ENCODE measurements at regions of chr10 and their contacts with region 1.

Region 1: GRCh38 chr10:98467506-98468346 is 21.0 kb upstream of the HPS1 start:
- DNase-seq: peak; percentile 68
- ATAC-seq: peak; percentile 92
- H3K4me3 Mint-ChIP-seq: peak overlapping the region; percentile 76
- H3K27ac Mint-ChIP-seq: no peak overlapping the region
- H3K4me1 Mint-ChIP-seq: peaks cover 42% of the 10 kb centered on the region
- H3K27me3 Mint-ChIP-seq: peaks cover 28% of the 10 kb centered on the region
- CTCF ChIP-seq: peak; percentile 65

Region 2: DNA sequence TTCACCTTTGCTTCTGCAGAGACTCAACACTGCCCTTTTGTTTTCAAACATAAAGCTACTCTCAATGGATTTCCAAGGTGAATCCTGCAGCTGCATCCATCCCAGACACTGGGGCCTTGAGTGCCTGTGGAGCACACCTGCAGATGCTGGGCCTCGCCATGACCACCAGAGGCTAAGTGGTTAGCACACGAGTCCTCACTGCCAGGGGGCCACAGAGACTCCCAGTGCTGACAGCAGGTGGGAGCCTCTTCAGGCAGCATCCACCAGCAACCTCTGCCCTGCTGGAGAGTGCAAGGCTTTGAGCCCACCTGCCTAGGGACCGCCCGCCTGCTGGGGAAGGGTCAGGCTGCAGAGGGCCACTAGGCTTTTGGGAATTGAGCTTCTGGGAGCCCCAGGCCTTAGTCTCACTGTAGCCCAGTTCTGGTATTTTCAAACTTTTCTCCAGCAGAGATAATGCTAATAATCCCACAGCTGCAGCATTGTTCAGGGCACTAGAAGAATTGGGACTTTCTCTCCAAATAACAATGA is 11.6 kb before region 1 on chr10:
- CTCF ChIA-PET with region 1: interaction called, 26 read pairs
- POLR2A ChIA-PET with region 1: no interaction called
- DNase-seq: no peak
- ATAC-seq: peak; percentile 11; the same call in 1 of the 2 replicates
- H3K4me3 Mint-ChIP-seq: no peak overlapping the region
- H3K27ac Mint-ChIP-seq: no peak overlapping the region
- H3K4me1 Mint-ChIP-seq: peaks cover 44% of the 10 kb centered on the region
- H3K27me3 Mint-ChIP-seq: no peaks in the 10 kb centered on the region; the same call in 1 of the 2 replicates
- CTCF ChIP-seq: no peak

Region 3: GRCh38 chr10:98646998-98647917 is 179.5 kb after region 1 on chr10:
- CTCF ChIA-PET with region 1: interaction called, 13 read pairs
- POLR2A ChIA-PET with region 1: no interaction called
- DNase-seq: peak; percentile 35
- ATAC-seq: peak; percentile 93
- H3K4me3 Mint-ChIP-seq: peak overlapping the region; percentile 34
- H3K27ac Mint-ChIP-seq: peak overlapping the region; percentile 96
- H3K4me1 Mint-ChIP-seq: peaks cover 44% of the 10 kb centered on the region
- H3K27me3 Mint-ChIP-seq: no peaks in the 10 kb centered on the region
- CTCF ChIP-seq: no peak

Region 4: DNA sequence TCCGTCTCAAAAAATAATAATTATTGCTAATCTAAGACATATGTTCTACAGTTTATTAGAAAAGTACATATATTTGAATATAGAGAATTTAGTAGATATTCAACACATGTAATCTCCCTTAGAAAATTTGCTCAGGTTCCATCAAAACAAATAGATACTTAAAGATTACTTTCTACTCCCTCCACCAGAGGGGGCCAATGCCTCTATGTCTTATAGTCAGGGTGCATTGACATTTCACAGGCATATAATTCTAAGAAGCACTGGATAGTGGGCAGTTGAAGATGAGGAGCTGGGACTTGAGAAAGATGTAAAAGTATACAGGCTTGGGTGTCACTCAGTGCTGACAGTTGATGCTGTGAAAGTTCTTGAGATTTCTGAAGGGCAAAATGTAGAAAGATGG is 280.6 kb after region 1 on chr10:
- CTCF ChIA-PET with region 1: interaction called, 10 read pairs
- POLR2A ChIA-PET with region 1: no interaction called
- DNase-seq: peak; percentile 28
- ATAC-seq: peak; percentile 61
- H3K4me3 Mint-ChIP-seq: no peak overlapping the region
- H3K27ac Mint-ChIP-seq: no peak overlapping the region
- H3K4me1 Mint-ChIP-seq: no peaks in the 10 kb centered on the region
- H3K27me3 Mint-ChIP-seq: no peaks in the 10 kb centered on the region
- CTCF ChIP-seq: peak; percentile 42; the same call in 1 of the 2 replicates

Region 5: DNA sequence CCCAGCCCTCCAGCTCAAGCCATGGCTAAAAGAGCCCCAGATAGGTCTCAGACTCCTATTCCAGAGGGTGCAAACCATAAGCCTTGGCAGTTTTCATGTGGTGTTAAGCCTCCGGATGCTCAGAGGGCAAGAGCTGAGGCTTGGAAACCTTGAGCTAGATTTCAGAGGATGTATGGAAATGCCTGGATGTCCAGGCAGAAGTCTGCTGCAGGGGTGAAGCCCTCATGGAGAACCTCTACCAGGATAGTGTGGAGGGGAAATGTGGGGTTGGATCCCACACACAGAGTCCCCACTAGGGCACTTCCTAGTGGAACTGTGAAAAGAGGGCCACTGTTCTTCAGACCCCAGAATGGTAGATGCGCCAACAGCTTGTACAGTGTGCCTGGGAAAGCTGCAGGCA is 781.1 kb after region 1 on chr10:
- CTCF ChIA-PET with region 1: interaction called, 14 read pairs
- POLR2A ChIA-PET with region 1: no interaction called
- DNase-seq: no peak
- ATAC-seq: no peak
- H3K4me3 Mint-ChIP-seq: no peak overlapping the region
- H3K27ac Mint-ChIP-seq: no peak overlapping the region
- H3K4me1 Mint-ChIP-seq: no peaks in the 10 kb centered on the region
- H3K27me3 Mint-ChIP-seq: peaks cover 5% of the 10 kb centered on the region
- CTCF ChIP-seq: no peak

Measured in WTC11 (cell line).